ENCODE measurements at regions of chr5 and their contacts with region 1.

Region 1: DNA sequence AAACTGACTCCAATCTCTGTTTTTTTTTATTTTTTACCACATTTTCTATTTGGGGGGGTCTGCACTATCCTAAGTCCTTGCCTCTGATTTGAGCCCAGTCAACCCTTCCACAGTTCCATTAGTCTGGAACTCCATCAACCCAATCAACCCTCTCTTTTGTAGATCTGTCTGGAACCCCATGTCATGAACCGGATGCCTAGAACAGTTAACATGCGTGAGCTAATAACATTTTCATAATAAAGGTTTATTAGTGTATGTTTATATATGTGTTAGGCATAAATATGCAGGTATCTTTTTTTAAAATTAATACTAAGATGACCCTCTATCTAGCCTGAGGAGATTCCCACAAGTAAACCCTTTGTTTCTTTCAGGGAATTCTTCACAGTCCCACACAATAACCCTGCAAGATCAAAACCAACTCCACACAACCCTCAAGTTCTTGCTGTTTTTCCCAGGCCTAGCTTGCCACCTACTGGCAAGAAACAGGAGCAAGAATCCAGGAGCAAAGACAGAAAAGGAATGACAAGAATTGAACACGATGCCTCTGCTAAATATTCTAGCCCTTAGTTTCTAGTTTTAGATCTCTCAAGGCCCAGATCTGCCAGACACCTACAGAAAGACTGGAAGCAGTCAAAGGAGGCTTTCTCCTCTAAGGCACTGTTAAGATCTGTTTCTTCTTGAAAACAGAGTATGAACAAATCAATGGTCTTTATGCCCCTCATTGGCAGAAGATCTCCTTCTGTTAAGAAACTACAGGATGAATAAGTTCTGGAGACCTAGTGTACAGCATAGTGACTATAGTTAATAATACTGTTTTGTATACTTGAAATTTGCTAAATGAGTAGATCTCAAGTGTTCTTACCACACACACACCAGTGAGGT is 100.4 kb downstream of the TRIM36 start:
- DNase-seq: no peak
- ATAC-seq: peak in 1 of 2 donors; percentile 66

Region 2: GRCh38 chr5:113612060-113612496 is 1457.2 kb before region 1 on chr5:
- intact Hi-C with region 1: loop called in 1 of 2 experiments (anchors 5 kb)
- DNase-seq: no peak
- ATAC-seq: peak; percentile 28 to 58

Region 3: DNA sequence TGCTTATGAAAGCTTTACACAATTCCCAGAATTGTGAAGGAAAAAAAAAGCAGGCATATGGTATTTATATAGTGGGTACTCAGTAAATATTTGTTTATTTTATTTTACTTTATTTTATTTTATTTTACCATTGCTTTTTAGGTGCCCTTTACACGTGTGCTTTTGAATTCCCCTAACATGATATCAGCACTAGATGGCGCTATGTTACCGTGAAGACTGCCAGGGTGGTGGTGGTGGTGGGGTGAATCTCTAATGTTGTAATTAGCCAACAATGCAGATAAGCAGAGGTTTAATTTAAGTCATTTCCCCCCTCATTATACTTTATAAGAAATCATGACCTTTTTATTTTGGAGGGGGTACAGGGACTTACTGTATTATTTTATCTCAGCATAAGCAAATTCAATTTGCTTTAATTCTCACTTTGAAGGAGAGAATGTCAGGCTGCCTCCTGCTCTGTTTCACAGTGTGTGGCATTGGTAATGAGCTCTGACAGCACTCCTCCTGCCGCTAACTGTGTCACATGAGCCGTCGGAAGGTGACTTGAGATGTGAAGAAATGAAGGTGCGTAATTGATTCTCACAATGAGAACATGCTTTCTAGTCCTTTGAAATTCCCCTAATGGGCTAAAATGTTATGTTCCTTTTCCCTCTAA is 1390.3 kb before region 1 on chr5:
- intact Hi-C with region 1: loop called in 1 of 2 experiments (anchors 5 kb)
- DNase-seq: no peak
- ATAC-seq: peak; percentile 65 to 79

Region 4: GRCh38 chr5:115022303-115022702 is 47.0 kb before region 1 on chr5:
- intact Hi-C with region 1: no loop called
- DNase-seq: no peak
- ATAC-seq: no peak

Region 5: GRCh38 chr5:115507681-115508080 is 438.4 kb after region 1 on chr5:
- intact Hi-C with region 1: no loop called
- DNase-seq: no peak
- ATAC-seq: peak in 1 of 2 donors; percentile 63

Measured in left cardiac atrium (tissue), 4 donors.